ENCODE measurements at regions of chr13 and their contacts with region 1.

Region 1: GRCh38 chr13:113981201-113981605 is 7.3 kb upstream of the C13orf46 start:
- DNase-seq: peak; percentile 98 to 99
- H3K4me3 ChIP-seq: no peak overlapping the region
- H3K27ac ChIP-seq: peak overlapping the region; percentile 63
- H3K4me1 ChIP-seq: peaks cover 36% of the 10 kb centered on the region
- H3K27me3 ChIP-seq: no peaks in the 10 kb centered on the region
- CTCF ChIP-seq: no peak; the same call in 1 of the 2 replicates

Region 2: DNA sequence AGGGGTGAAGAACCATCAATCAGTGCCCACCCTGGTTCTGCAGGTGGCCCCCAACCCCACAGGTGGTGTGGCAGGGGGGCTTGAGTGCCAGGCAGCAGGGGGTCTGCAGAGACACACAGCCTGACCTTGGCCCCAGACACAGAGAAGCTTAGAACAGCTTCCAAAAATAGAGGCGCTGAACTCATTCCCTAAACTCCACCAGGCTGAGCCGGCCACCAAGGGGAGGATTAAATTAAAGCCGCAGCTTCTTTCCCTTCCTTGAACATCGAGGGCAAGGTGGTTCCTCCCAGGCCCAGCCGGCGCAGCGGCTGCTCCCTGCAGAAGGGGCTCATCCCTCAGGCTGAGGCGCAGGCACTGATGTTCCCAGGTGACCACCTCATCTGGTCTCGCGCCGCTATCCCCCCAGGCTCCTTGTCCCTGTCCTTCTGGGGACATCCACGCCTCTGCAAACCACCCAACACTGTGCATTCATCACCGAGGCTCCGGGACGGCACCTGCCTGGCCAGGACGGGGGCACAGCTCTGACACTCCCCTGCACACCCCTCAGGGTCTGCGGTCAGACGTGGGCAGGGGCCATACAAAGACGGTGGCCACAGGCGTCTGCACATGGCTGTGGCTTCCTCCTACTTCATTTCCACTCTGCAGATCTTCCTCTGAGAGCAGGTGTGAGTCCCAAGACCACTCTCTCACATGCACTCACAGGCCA is 653.3 kb before region 1 on chr13:
- CTCF ChIA-PET with region 1: no interaction called
- POLR2A ChIA-PET with region 1: no interaction called
- intact Hi-C with region 1: no loop called
- DNase-seq: peak in 1 of 2 experiments; percentile 30
- H3K4me3 ChIP-seq: no peak overlapping the region
- H3K27ac ChIP-seq: no peak overlapping the region
- H3K4me1 ChIP-seq: peaks cover 15% of the 10 kb centered on the region
- H3K27me3 ChIP-seq: no peaks in the 10 kb centered on the region
- CTCF ChIP-seq: no peak

Region 3: GRCh38 chr13:113881614-113882266 is 99.5 kb before region 1 on chr13:
- CTCF ChIA-PET with region 1: no interaction called
- POLR2A ChIA-PET with region 1: no interaction called
- intact Hi-C with region 1: no loop called
- DNase-seq: peak in 1 of 2 experiments; percentile 44
- H3K4me3 ChIP-seq: no peak overlapping the region
- H3K27ac ChIP-seq: no peak overlapping the region
- H3K4me1 ChIP-seq: no peaks in the 10 kb centered on the region; the same call in 1 of the 2 replicates
- H3K27me3 ChIP-seq: no peaks in the 10 kb centered on the region
- CTCF ChIP-seq: no peak

Region 4: DNA sequence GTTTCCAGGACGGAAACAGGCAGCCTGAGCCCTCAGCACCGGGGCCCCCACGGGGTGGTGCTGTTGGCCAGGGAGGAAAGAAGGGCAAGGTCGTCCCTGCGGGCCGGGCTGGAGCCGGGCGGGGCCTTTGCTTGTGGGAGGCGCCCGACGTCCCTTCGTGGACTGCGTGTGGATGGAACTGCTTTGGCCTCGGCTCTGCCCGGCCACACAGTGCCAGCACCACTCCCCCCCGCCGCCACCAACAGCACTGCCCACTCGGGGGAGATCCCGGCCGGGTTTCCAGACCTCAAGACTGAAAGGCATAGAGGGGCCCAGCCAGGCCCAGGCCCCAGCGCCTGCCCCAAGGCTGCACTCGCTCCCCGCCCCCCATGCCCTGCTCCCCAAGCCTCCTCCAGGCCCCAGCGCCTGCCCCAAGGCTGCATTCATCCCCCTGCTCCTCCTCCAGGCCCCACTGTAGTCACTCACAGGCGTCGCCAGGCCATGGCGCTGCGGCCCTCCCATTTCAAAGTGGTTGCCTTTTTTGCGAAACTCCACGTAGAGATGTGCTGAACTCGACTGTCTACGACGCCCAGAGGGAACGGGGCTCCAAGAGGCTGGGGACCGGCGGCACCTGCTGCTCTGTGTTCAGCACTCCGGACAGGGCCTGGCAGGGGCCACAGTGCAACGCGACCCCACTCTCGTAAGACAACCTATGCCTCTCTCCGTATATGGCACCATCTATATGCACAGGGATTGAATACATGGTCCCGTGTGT is 29.8 kb before region 1 on chr13:
- CTCF ChIA-PET with region 1: no interaction called
- POLR2A ChIA-PET with region 1: no interaction called
- intact Hi-C with region 1: no loop called
- DNase-seq: peak; percentile 60 to 86
- H3K4me3 ChIP-seq: no peak overlapping the region
- H3K27ac ChIP-seq: no peak overlapping the region
- H3K4me1 ChIP-seq: no peaks in the 10 kb centered on the region
- H3K27me3 ChIP-seq: no peaks in the 10 kb centered on the region
- CTCF ChIP-seq: peak; percentile 89

Region 5: DNA sequence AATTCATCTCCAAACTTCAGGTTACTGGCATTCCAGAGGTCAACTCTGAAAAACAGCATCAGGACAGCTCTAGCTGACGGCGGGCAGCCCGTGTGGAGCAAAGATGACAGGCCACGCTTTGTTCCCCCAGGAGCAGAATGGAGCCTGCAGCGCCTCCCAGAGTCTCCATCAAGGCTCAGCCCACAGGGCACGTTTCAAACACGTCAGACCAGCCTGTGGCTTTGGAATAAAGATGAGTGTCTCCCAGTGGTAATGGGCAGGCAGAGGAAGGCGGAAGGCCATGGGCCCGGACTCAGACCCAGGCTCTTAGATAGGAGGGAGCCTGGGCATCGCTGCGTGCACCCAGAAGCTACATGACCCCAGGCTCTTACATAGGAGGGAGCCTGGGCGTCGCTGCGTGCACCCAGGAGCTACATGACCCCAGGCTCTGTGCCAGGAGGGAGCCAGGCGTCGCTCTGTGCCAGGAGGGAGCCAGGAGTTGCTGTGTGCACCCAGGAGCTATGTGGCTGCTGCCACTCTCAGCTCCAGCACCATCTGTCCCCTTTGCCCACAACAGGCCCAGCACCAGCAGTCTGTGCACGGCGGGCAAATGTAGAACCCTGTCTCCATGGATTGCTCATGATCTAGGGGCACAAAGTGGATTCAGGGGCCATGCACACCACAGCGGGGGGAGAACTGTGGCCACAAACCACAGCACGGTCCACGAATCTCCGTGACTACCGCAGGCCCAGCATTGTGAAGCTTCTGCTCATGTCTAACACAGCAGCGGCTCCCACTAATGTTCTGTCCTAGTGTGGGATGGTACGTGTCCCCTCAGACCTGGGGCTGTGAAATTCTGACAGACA is 40.5 kb after region 1 on chr13:
- CTCF ChIA-PET with region 1: no interaction called
- POLR2A ChIA-PET with region 1: no interaction called
- intact Hi-C with region 1: no loop called
- DNase-seq: no peak
- H3K4me3 ChIP-seq: no peak overlapping the region
- H3K27ac ChIP-seq: no peak overlapping the region
- H3K4me1 ChIP-seq: no peaks in the 10 kb centered on the region
- H3K27me3 ChIP-seq: no peaks in the 10 kb centered on the region
- CTCF ChIP-seq: no peak

Region 6: DNA sequence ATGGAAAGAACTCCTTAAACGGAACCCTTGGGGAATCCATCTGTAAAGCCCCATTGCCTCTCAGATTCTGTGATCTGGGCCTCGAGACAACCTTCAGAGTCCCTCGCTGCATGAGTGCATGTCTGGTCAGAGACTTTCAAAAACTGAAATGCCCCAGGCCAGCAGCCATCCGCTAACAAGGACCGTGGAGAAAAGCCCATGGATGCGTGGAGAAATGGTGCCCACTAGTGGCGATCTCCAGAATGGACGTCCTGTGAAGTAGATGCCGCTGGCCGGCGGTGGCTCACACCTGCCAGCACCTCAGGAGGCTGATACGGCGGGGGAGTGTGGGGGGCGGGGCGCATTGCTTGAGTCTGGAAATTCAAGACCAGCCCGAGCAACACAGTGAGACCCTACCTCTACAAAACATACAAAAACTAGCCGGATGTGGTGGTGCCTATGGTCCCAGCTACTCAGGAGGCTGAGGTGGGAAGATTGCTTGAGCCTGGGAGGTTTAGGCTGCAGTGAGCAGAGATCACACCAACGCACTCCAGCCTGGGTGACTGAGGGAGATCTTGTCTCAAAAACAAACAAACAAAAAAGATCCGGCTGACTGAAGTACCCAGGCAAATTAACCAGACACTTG is 245.6 kb after region 1 on chr13:
- CTCF ChIA-PET with region 1: no interaction called
- POLR2A ChIA-PET with region 1: no interaction called
- intact Hi-C with region 1: loop called (anchors 5 kb)
- DNase-seq: peak; percentile 76 to 87
- H3K4me3 ChIP-seq: no peak overlapping the region
- H3K27ac ChIP-seq: no peak overlapping the region
- H3K4me1 ChIP-seq: 0 out of 2 replicates have a peak, but pooled peaks cover 11% of the 10 kb centered on the region
- H3K27me3 ChIP-seq: peaks cover 9% of the 10 kb centered on the region; the same call in 1 of the 2 replicates
- CTCF ChIP-seq: peak; percentile 95